Activated CD4-positive, alpha-beta memory T cell treated with anti-CD3 and anti-CD28 coated beads, Interleukin-2, amount 10 ng/mL, durations not matched to agents 7 days and 5 days (primary cell): ENCODE measurements at regions of chr22 and their contacts with region 1.

Region 1: GRCh38 chr22:44080936-44081861 is 57.1 kb downstream of the PARVB start:
- DNase-seq: peak; percentile 73
- H3K4me3 Mint-ChIP-seq: no peak overlapping the region
- H3K27ac Mint-ChIP-seq: no peak overlapping the region
- H3K4me1 Mint-ChIP-seq: no peaks in the 10 kb centered on the region
- H3K27me3 Mint-ChIP-seq: no peaks in the 10 kb centered on the region

Region 2: GRCh38 chr22:44112191-44112590 is 31.0 kb after region 1 on chr22:
- CTCF ChIA-PET with region 1: no interaction called
- POLR2A ChIA-PET with region 1: no interaction called
- DNase-seq: no peak
- H3K4me3 Mint-ChIP-seq: no peak overlapping the region
- H3K27ac Mint-ChIP-seq: no peak overlapping the region
- H3K4me1 Mint-ChIP-seq: peaks cover 5% of the 10 kb centered on the region
- H3K27me3 Mint-ChIP-seq: no peaks in the 10 kb centered on the region

Region 3: GRCh38 chr22:44625981-44626687 is 544.9 kb after region 1 on chr22:
- CTCF ChIA-PET with region 1: interaction called, 11 read pairs
- POLR2A ChIA-PET with region 1: interaction called, 4 read pairs
- DNase-seq: peak; percentile 83
- H3K4me3 Mint-ChIP-seq: no peak overlapping the region
- H3K27ac Mint-ChIP-seq: no peak overlapping the region
- H3K4me1 Mint-ChIP-seq: peaks cover 5% of the 10 kb centered on the region
- H3K27me3 Mint-ChIP-seq: peaks cover 2% of the 10 kb centered on the region